ENCODE measurements at regions of chr1 and their contacts with region 1.

Region 1: GRCh38 chr1:232950197-232951176 is at the start of gene NTPCR:
- DNase-seq: peak; percentile 96
- H3K4me3 Mint-ChIP-seq: peak within 1 kb of the TSS; percentile 93
- H3K27ac Mint-ChIP-seq: peak within 1 kb of the TSS; percentile 89
- H3K4me1 Mint-ChIP-seq: peaks cover 34% of the 10 kb centered on the region
- H3K27me3 Mint-ChIP-seq: no peaks in the 10 kb centered on the region
- total RNA-seq, gene NTPCR: 41.7 to 45.0 TPM

Region 2: GRCh38 chr1:232635778-232636356 is 314.6 kb before region 1 on chr1:
- CTCF ChIA-PET with region 1: interaction called, 4 read pairs
- POLR2A ChIA-PET with region 1: no interaction called
- intact Hi-C with region 1: loop called (anchors 1 kb)
- DNase-seq: no peak
- H3K4me3 Mint-ChIP-seq: no peak overlapping the region
- H3K27ac Mint-ChIP-seq: no peak overlapping the region
- H3K4me1 Mint-ChIP-seq: peaks cover 7% of the 10 kb centered on the region
- H3K27me3 Mint-ChIP-seq: peaks cover 7% of the 10 kb centered on the region

Region 3: GRCh38 chr1:232805269-232806185 is 145.0 kb before region 1 on chr1 and contains the start of gene MAP10:
- CTCF ChIA-PET with region 1: interaction called, 3 read pairs
- POLR2A ChIA-PET with region 1: interaction called, 3 read pairs
- intact Hi-C with region 1: loop called (anchors 2 kb)
- DNase-seq: peak; percentile 84
- H3K4me3 Mint-ChIP-seq: peak within 1 kb of the TSS; percentile 84
- H3K27ac Mint-ChIP-seq: peak within 1 kb of the TSS; percentile 38
- H3K4me1 Mint-ChIP-seq: peaks cover 21% of the 10 kb centered on the region
- H3K27me3 Mint-ChIP-seq: no peaks in the 10 kb centered on the region
- total RNA-seq, gene MAP10: 0.86 to 1.1 TPM

Region 4: GRCh38 chr1:232911027-232911599 is 39.4 kb before region 1 on chr1:
- CTCF ChIA-PET with region 1: no interaction called
- POLR2A ChIA-PET with region 1: no interaction called
- intact Hi-C with region 1: loop called (anchors 5 kb)
- DNase-seq: peak; percentile 26
- H3K4me3 Mint-ChIP-seq: no peak overlapping the region
- H3K27ac Mint-ChIP-seq: no peak overlapping the region
- H3K4me1 Mint-ChIP-seq: peaks cover 24% of the 10 kb centered on the region
- H3K27me3 Mint-ChIP-seq: peaks cover 3% of the 10 kb centered on the region

Region 5: DNA sequence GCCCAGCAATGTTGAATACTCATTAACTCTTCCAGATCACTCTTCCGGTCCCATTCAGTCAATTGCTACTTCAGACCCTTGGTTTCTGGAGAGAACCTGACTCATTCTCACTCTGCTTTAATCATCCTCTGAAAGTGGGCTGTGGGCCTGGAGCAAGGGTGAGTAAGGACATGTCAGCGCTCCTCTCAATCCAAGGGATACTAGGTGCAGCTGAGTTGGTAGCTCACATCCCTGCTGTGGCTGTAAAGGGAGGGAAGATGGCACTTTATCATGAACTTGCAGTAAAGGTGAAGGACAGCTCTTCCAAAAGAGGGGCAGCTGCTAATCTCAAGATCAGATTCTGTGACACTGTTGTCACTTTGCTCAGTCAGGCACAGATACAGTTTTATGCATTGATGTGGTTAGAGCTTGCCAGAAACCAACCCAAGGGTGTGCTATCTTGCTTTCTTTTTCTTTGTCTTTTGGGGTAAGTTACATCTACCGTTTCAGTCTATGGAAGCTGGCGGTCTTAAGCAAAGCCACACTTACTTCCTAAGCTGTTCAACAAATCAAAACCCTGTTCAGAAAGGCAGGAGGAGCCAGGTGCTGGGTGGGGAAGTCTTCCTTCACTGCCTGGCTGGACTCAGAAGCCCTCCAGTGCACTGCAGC is 26.6 kb before region 1 on chr1:
- CTCF ChIA-PET with region 1: interaction called, 5 read pairs
- POLR2A ChIA-PET with region 1: interaction called, 3 read pairs
- intact Hi-C with region 1: loop called (anchors 1 kb)
- DNase-seq: peak; percentile 73
- H3K4me3 Mint-ChIP-seq: peak overlapping the region; percentile 18
- H3K27ac Mint-ChIP-seq: peak overlapping the region; percentile 91
- H3K4me1 Mint-ChIP-seq: peaks cover 40% of the 10 kb centered on the region
- H3K27me3 Mint-ChIP-seq: no peaks in the 10 kb centered on the region

Measured in activated CD4-positive, alpha-beta memory T cell treated with anti-CD3 and anti-CD28 coated beads for 36 hours (primary cell).